Endothelial cell of umbilical vein (primary cell): ENCODE measurements at regions of chr6 and their contacts with region 1.

Region 1: GRCh38 chr6:139219271-139219729 is 72.5 kb downstream of the TXLNB start:
- DNase-seq: peak; percentile 83
- H3K4me3 ChIP-seq: no peak overlapping the region
- H3K27ac ChIP-seq: no peak overlapping the region
- H3K4me1 ChIP-seq: peaks cover 3% of the 10 kb centered on the region
- H3K27me3 ChIP-seq: no peaks in the 10 kb centered on the region
- CTCF ChIP-seq: peak; percentile 68 to 84
- POLR2A ChIP-seq: no peak

Region 2: GRCh38 chr6:138817822-138818308 is 401.4 kb before region 1 on chr6:
- CTCF ChIA-PET with region 1: interaction called, 25 read pairs
- POLR2A ChIA-PET with region 1: no interaction called
- dilution Hi-C with region 1: no loop called
- intact Hi-C with region 1: loop called (anchors 5 kb)
- DNase-seq: peak; percentile 56
- H3K4me3 ChIP-seq: no peak overlapping the region
- H3K27ac ChIP-seq: no peak overlapping the region
- H3K4me1 ChIP-seq: peaks cover 23% of the 10 kb centered on the region
- H3K27me3 ChIP-seq: no peaks in the 10 kb centered on the region
- CTCF ChIP-seq: no peak
- POLR2A ChIP-seq: no peak

Region 3: GRCh38 chr6:139230391-139230840 is 11.1 kb after region 1 on chr6:
- CTCF ChIA-PET with region 1: interaction called, 11 read pairs
- POLR2A ChIA-PET with region 1: no interaction called
- dilution Hi-C with region 1: no loop called
- intact Hi-C with region 1: no loop called
- DNase-seq: no peak
- H3K4me3 ChIP-seq: no peak overlapping the region
- H3K27ac ChIP-seq: no peak overlapping the region
- H3K4me1 ChIP-seq: no peaks in the 10 kb centered on the region
- H3K27me3 ChIP-seq: no peaks in the 10 kb centered on the region
- CTCF ChIP-seq: no peak
- POLR2A ChIP-seq: no peak

Region 4: GRCh38 chr6:139290787-139291311 is 71.5 kb after region 1 on chr6:
- CTCF ChIA-PET with region 1: interaction called, 9 read pairs
- POLR2A ChIA-PET with region 1: no interaction called
- dilution Hi-C with region 1: no loop called
- intact Hi-C with region 1: loop called (anchors 1 kb)
- DNase-seq: peak; percentile 79
- H3K4me3 ChIP-seq: no peak overlapping the region
- H3K27ac ChIP-seq: peak overlapping the region; percentile 9
- H3K4me1 ChIP-seq: peaks cover 9% of the 10 kb centered on the region
- H3K27me3 ChIP-seq: no peaks in the 10 kb centered on the region
- CTCF ChIP-seq: no peak
- POLR2A ChIP-seq: no peak

Region 5: GRCh38 chr6:139355172-139355571 is 135.9 kb after region 1 on chr6:
- CTCF ChIA-PET with region 1: interaction called, 47 read pairs
- POLR2A ChIA-PET with region 1: no interaction called
- dilution Hi-C with region 1: no loop called
- intact Hi-C with region 1: no loop called
- DNase-seq: no peak
- H3K4me3 ChIP-seq: no peak overlapping the region
- H3K27ac ChIP-seq: no peak overlapping the region
- H3K4me1 ChIP-seq: no peaks in the 10 kb centered on the region
- H3K27me3 ChIP-seq: peaks cover under 1 to 3% of the 10 kb centered on the region in 2 experiments
- CTCF ChIP-seq: no peak
- POLR2A ChIP-seq: no peak

Region 6: DNA sequence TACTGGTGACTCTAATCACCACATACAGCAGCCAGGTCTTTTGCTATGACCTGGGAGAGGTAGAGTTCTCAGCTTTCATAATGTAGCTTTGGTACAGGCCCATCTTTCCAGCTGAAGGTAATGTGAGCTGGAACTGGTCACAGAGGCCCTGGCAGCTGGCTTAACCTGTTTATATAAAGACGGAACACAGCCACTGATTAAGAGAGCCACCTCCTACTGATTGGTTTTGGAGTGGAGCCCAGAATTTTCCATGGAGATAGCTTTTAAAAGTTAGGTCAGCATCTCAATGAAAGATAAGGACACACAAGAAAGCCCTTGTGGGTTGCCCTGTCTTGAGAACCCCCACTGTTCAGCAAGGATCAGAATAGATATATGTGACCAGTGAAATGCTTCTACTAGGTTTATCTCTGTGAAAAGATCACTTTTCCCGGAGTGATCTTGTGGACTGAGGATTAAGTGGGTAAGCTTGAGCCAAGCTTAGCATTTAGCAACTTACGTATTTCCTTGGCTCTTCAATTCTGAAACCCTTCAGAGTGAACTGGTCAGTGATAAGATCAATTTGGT is 368.9 kb after region 1 on chr6:
- CTCF ChIA-PET with region 1: no interaction called
- POLR2A ChIA-PET with region 1: no interaction called
- dilution Hi-C with region 1: no loop called
- intact Hi-C with region 1: loop called (anchors 5 kb)
- DNase-seq: peak; percentile 67
- H3K4me3 ChIP-seq: no peak overlapping the region
- H3K27ac ChIP-seq: peak overlapping the region; percentile 34
- H3K4me1 ChIP-seq: peaks cover 22% of the 10 kb centered on the region
- H3K27me3 ChIP-seq: no peaks in the 10 kb centered on the region
- CTCF ChIP-seq: no peak
- POLR2A ChIP-seq: no peak